ENCODE measurements at regions of chr19 and their contacts with region 1.

Region 1: GRCh38 chr19:5585461-5586299 is 17.9 kb upstream of the TINCR start:
- DNase-seq: peak in 4 of 5 donors; percentile 17 to 53 (median 34)
- H3K4me3 ChIP-seq: no peak overlapping the region
- H3K4me3 Mint-ChIP-seq: peak overlapping the region in 5 of 7 donors; percentile 8 to 76 (median 63)
- H3K27ac ChIP-seq: no peak overlapping the region
- H3K27ac Mint-ChIP-seq: peak overlapping the region in 6 of 8 donors; percentile 35 to 88 (median 77)
- H3K4me1 ChIP-seq: peaks cover 12% of the 10 kb centered on the region
- H3K4me1 Mint-ChIP-seq: peaks cover 0 to 12% (median 4%) of the 10 kb centered on the region in 3 donors
- H3K27me3 ChIP-seq: no peaks in the 10 kb centered on the region
- H3K27me3 Mint-ChIP-seq: peaks cover 0 to 2% of the 10 kb centered on the region in 2 donors

Region 2: GRCh38 chr19:5561559-5561958 is 24.1 kb before region 1 on chr19:
- CTCF ChIA-PET with region 1: no interaction called
- POLR2A ChIA-PET with region 1: no interaction called
- DNase-seq: no peak
- H3K4me3 ChIP-seq: no peak overlapping the region
- H3K4me3 Mint-ChIP-seq: no peak overlapping the region
- H3K27ac ChIP-seq: no peak overlapping the region
- H3K27ac Mint-ChIP-seq: no peak overlapping the region
- H3K4me1 ChIP-seq: no peaks in the 10 kb centered on the region
- H3K4me1 Mint-ChIP-seq: no peaks in the 10 kb centered on the region
- H3K27me3 ChIP-seq: peaks cover 11% of the 10 kb centered on the region
- H3K27me3 Mint-ChIP-seq: peaks cover 23 to 41% of the 10 kb centered on the region in 2 donors

Region 3: GRCh38 chr19:5615756-5616332 is 30.2 kb after region 1 on chr19:
- CTCF ChIA-PET with region 1: no interaction called
- POLR2A ChIA-PET with region 1: interaction called, 10 read pairs
- DNase-seq: no peak
- H3K4me3 ChIP-seq: no peak overlapping the region
- H3K4me3 Mint-ChIP-seq: no peak overlapping the region
- H3K27ac ChIP-seq: no peak overlapping the region
- H3K27ac Mint-ChIP-seq: no peak overlapping the region
- H3K4me1 ChIP-seq: peaks cover 35% of the 10 kb centered on the region
- H3K4me1 Mint-ChIP-seq: peaks cover 42 to 53% (median 46%) of the 10 kb centered on the region in 3 donors
- H3K27me3 ChIP-seq: no peaks in the 10 kb centered on the region
- H3K27me3 Mint-ChIP-seq: peaks cover 0 to 4% of the 10 kb centered on the region in 2 donors

Region 4: GRCh38 chr19:5627395-5627904 is 41.8 kb after region 1 on chr19:
- CTCF ChIA-PET with region 1: no interaction called
- POLR2A ChIA-PET with region 1: no interaction called
- DNase-seq: no peak
- H3K4me3 ChIP-seq: no peak overlapping the region
- H3K4me3 Mint-ChIP-seq: peak overlapping the region in 5 of 7 donors; percentile 36 to 70 (median 57)
- H3K27ac ChIP-seq: peak overlapping the region; percentile 28
- H3K27ac Mint-ChIP-seq: peak overlapping the region in 7 of 8 donors; percentile 17 to 91 (median 82)
- H3K4me1 ChIP-seq: peaks cover 79% of the 10 kb centered on the region
- H3K4me1 Mint-ChIP-seq: peaks cover 70 to 90% (median 85%) of the 10 kb centered on the region in 3 donors
- H3K27me3 ChIP-seq: no peaks in the 10 kb centered on the region
- H3K27me3 Mint-ChIP-seq: peaks cover 0 to 6% of the 10 kb centered on the region in 2 donors

Region 5: DNA sequence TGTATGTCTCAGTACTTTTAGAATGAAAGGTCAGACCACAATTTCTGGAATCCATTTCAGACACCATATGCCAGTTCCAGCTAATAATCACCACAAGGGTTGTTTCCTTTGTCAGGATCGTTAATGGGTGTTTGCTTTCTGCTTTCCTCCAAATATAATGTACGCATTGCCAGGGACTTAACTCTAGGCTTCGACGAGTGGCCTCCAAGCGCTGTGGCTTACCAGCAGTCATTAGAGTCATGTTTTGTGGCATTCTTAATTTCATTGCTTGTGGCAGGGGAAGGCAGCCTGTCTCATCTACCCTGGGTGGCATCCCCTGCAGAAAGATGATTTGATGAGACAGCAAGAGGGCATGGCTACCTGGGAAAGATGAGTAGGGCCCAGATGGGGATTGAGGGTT is 59.7 kb after region 1 on chr19:
- CTCF ChIA-PET with region 1: no interaction called
- POLR2A ChIA-PET with region 1: no interaction called
- DNase-seq: no peak
- H3K4me3 ChIP-seq: no peak overlapping the region
- H3K4me3 Mint-ChIP-seq: no peak overlapping the region
- H3K27ac ChIP-seq: no peak overlapping the region
- H3K27ac Mint-ChIP-seq: peak overlapping the region in 4 of 8 donors; percentile 18 to 60 (median 34)
- H3K4me1 ChIP-seq: no peaks in the 10 kb centered on the region
- H3K4me1 Mint-ChIP-seq: peaks cover 36 to 48% (median 37%) of the 10 kb centered on the region in 3 donors
- H3K27me3 ChIP-seq: no peaks in the 10 kb centered on the region
- H3K27me3 Mint-ChIP-seq: peaks cover 0 to 3% of the 10 kb centered on the region in 2 donors

Region 6: DNA sequence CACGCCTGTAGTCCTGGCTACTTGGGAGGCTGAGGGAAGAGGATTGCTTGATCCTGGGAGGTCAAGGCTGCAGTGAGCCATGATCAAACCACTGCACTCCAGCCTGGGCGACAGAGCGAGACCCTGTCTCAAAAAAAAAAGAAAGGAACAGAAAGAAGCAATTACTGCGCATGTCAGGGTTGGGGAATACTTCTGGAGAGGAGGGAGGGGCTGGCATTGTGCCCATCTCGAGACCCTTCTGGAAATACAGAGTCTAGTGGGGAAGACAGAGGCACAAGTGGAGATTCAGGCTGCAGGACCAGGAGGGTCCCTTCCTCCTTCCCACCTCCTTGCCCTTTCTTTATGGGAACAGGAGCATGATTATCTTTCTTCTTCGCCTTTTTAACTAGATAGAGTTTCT is 168.1 kb after region 1 on chr19:
- CTCF ChIA-PET with region 1: no interaction called
- POLR2A ChIA-PET with region 1: no interaction called
- DNase-seq: no peak
- H3K4me3 ChIP-seq: no peak overlapping the region
- H3K4me3 Mint-ChIP-seq: no peak overlapping the region
- H3K27ac ChIP-seq: no peak overlapping the region
- H3K27ac Mint-ChIP-seq: peak overlapping the region in 1 of 8 donors; percentile 50
- H3K4me1 ChIP-seq: no peaks in the 10 kb centered on the region
- H3K4me1 Mint-ChIP-seq: no peaks in the 10 kb centered on the region
- H3K27me3 ChIP-seq: no peaks in the 10 kb centered on the region
- H3K27me3 Mint-ChIP-seq: peaks cover 9 to 10% of the 10 kb centered on the region in 2 donors

Measured in CD8-positive, alpha-beta memory T cell (primary cell).